A673 (cell line): ENCODE measurements at regions of chrX and their contacts with region 1.

Region 1: DNA sequence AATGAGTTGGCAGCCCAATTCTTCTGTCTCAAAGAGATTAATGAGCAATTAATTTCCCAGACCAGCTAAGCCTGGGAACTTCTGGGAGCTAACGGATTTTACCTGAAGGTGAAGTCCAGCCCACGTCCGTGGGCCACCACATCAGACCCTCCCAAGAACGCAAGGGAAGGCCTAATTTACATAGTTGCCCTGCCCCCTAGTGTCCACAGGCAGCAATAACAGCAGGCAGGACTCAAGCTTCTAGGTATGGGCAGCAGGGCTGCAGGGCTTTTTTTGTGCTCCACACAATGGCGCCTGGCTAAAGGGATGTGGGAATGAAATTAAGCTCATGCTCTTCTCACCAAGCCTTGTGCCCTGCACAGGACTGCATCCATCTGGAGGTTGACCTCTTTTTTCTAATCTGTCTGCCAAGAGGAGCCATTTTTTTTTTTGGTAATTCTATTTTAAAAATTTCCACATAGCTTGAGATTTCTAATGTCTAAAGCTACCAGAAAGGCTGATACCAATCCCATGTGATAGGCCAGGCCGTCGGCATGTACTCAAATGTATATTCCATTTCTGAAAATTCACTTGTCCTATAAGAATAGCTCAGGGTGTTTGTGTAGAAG is 111.9 kb upstream of the TMEM164 start:
- DNase-seq: peak; percentile 77
- H3K4me3 ChIP-seq: no peak overlapping the region
- H3K27ac ChIP-seq: no peak overlapping the region
- H3K4me1 ChIP-seq: no peaks in the 10 kb centered on the region
- H3K27me3 ChIP-seq: no peaks in the 10 kb centered on the region
- CTCF ChIP-seq: peak; percentile 92

Region 2: GRCh38 chrX:108699368-108699767 is 1191.6 kb before region 1 on chrX:
- CTCF ChIA-PET with region 1: no interaction called
- POLR2A ChIA-PET with region 1: no interaction called
- intact Hi-C with region 1: loop called (anchors 10 kb)
- DNase-seq: peak; percentile 56
- H3K4me3 ChIP-seq: no peak overlapping the region
- H3K27ac ChIP-seq: no peak overlapping the region
- H3K4me1 ChIP-seq: no peaks in the 10 kb centered on the region
- H3K27me3 ChIP-seq: peaks cover 3% of the 10 kb centered on the region
- CTCF ChIP-seq: peak; percentile 56

Region 3: DNA sequence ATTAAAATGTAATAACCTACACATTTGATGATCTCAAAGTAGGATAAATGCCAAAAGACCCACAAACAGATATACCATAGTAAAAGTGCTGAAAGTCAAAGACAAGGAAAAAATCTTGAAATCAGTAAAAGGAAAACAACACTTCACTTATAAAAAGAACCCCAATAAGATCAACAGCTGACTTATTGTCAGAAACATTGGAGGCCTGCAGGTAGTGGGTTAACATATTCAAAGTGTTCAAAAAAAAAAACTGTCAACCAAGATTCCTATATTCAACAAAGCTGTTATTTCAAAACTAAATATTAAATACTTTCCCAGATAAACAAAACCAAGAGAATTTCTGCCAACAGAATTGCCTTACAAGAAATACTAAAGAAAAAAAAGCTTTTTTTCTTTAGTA is 756.2 kb before region 1 on chrX:
- CTCF ChIA-PET with region 1: no interaction called
- POLR2A ChIA-PET with region 1: no interaction called
- intact Hi-C with region 1: no loop called
- DNase-seq: no peak
- H3K4me3 ChIP-seq: no peak overlapping the region
- H3K27ac ChIP-seq: no peak overlapping the region
- H3K4me1 ChIP-seq: no peaks in the 10 kb centered on the region
- H3K27me3 ChIP-seq: no peaks in the 10 kb centered on the region
- CTCF ChIP-seq: no peak

Region 4: GRCh38 chrX:109485470-109486340 is 405.3 kb before region 1 on chrX:
- CTCF ChIA-PET with region 1: interaction called, 10 read pairs
- POLR2A ChIA-PET with region 1: no interaction called
- intact Hi-C with region 1: loop called (anchors 2 kb)
- DNase-seq: peak; percentile 80
- H3K4me3 ChIP-seq: no peak overlapping the region
- H3K27ac ChIP-seq: no peak overlapping the region
- H3K4me1 ChIP-seq: no peaks in the 10 kb centered on the region
- H3K27me3 ChIP-seq: no peaks in the 10 kb centered on the region
- CTCF ChIP-seq: peak; percentile 99

Region 5: GRCh38 chrX:109553862-109554261 is 337.1 kb before region 1 on chrX:
- CTCF ChIA-PET with region 1: no interaction called
- POLR2A ChIA-PET with region 1: no interaction called
- intact Hi-C with region 1: no loop called
- DNase-seq: no peak
- H3K4me3 ChIP-seq: no peak overlapping the region
- H3K27ac ChIP-seq: no peak overlapping the region
- H3K4me1 ChIP-seq: no peaks in the 10 kb centered on the region
- H3K27me3 ChIP-seq: peaks cover 5% of the 10 kb centered on the region
- CTCF ChIP-seq: no peak

Region 6: GRCh38 chrX:109635176-109635575 is 255.8 kb before region 1 on chrX:
- CTCF ChIA-PET with region 1: interaction called, 9 read pairs
- POLR2A ChIA-PET with region 1: no interaction called
- intact Hi-C with region 1: loop called (anchors 2 kb)
- DNase-seq: peak; percentile 48
- H3K4me3 ChIP-seq: no peak overlapping the region
- H3K27ac ChIP-seq: no peak overlapping the region
- H3K4me1 ChIP-seq: no peaks in the 10 kb centered on the region
- H3K27me3 ChIP-seq: no peaks in the 10 kb centered on the region
- CTCF ChIP-seq: peak; percentile 77

Region 7: DNA sequence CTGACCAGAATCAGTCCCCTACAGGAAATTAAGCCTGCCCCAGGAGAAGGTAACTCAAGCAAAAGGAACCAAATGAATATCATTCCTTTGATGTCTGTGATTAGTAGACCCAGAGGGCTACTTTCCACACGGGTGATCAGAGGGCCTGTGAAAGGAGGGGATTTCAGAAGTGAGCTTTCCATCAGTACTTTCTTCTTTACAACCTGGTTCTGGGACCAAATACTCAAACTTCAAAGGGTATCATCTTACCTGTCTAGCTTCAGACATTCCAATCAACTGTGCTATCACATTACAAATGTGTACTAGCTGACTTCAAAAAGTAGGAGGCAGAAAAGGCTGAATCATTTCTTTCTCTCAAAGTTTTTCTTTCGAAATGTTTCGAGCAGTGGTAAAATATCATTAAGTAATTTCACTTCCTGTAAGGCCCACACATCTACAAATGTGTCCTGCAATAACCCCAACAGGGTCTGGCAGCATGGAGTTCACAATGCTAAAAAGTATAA is 181.8 kb before region 1 on chrX:
- CTCF ChIA-PET with region 1: interaction called, 12 read pairs
- POLR2A ChIA-PET with region 1: no interaction called
- intact Hi-C with region 1: loop called (anchors 1 kb)
- DNase-seq: peak; percentile 45
- H3K4me3 ChIP-seq: peak overlapping the region; percentile 0
- H3K27ac ChIP-seq: peak overlapping the region; percentile 58
- H3K4me1 ChIP-seq: peaks cover 10% of the 10 kb centered on the region
- H3K27me3 ChIP-seq: no peaks in the 10 kb centered on the region
- CTCF ChIP-seq: no peak

Region 8: GRCh38 chrX:109880629-109881028 is 10.4 kb before region 1 on chrX:
- CTCF ChIA-PET with region 1: interaction called, 10 read pairs
- POLR2A ChIA-PET with region 1: no interaction called
- intact Hi-C with region 1: no loop called
- DNase-seq: no peak
- H3K4me3 ChIP-seq: no peak overlapping the region
- H3K27ac ChIP-seq: no peak overlapping the region
- H3K4me1 ChIP-seq: peaks cover 5% of the 10 kb centered on the region
- H3K27me3 ChIP-seq: no peaks in the 10 kb centered on the region
- CTCF ChIP-seq: no peak

Region 9: DNA sequence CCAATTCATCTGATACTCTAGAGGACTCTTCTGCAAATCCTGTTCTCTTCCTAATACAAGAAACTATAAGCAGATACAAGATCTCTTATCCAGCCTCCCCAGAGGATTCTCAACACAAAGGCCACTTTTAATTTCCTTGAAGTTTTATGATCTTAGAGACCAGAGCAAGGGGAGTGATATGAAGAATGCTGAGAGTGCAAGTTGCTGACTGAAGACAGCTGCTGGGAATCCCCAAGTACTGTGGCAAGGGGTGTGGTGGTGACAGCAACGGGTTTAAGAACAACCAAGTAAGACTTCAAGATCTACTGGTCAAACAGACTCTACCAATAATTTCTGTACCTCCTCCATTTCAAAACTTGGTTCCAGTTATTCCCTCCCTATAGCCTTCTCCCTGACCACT is 419.9 kb after region 1 on chrX:
- CTCF ChIA-PET with region 1: no interaction called
- POLR2A ChIA-PET with region 1: no interaction called
- intact Hi-C with region 1: no loop called
- DNase-seq: peak; percentile 69
- H3K4me3 ChIP-seq: no peak overlapping the region
- H3K27ac ChIP-seq: no peak overlapping the region
- H3K4me1 ChIP-seq: peaks cover 24% of the 10 kb centered on the region
- H3K27me3 ChIP-seq: no peaks in the 10 kb centered on the region
- CTCF ChIP-seq: no peak